CD14-positive monocyte (primary cell): ENCODE measurements at regions of chr17 and their contacts with region 1.

Region 1: DNA sequence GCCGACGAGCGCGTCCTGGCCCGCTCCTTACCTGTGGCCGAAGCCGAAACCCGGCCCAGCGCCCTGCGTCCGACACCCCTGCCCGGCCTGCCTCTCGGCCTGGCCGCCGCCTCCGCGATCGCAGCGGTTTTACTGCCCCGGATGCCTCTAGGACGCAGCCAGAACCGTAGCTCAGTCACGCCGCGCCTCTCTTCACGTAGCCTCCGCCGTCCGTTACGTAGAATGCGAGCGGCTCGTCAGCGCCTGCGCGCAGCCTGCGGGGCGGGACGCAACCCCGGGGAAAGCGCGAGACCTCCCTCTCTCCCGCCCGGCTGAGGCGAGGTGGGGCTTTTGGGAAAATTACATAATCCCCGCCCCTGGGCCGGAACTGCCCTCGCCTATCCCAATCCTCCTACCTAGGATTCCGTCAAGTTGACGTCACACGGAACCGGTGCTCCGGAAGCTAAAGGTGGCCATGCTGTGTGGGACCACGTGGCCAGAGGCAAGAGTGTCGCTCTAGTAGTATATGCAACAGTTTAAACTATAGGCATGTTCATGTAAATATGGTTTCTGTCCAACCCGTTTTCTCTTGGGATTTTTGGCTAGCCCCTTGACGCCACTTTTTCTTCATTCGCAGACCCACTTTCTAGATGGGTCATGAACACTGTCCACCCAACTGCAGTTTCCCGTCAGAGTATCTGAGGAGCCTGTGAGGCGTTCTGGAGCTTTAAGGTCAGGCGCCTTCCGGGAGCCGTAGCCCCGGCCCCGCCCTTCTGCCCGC is at the start of gene CCDC47:
- DNase-seq: peak; percentile 98 to 99 (median 99)
- H3K4me3 ChIP-seq: peak within 1 kb of the TSS; percentile 93 to 96 (median 94)
- H3K4me3 Mint-ChIP-seq: peak within 1 kb of the TSS; percentile 92 to 96
- H3K27ac ChIP-seq: peak within 1 kb of the TSS; percentile 93 to 94
- H3K27ac Mint-ChIP-seq: peak within 1 kb of the TSS; percentile 99 to 100 (median 99)
- H3K4me1 ChIP-seq: peaks cover 39 to 54% of the 10 kb centered on the region in 2 donors
- H3K4me1 Mint-ChIP-seq: peaks cover 59% of the 10 kb centered on the region
- H3K27me3 ChIP-seq: no peaks in the 10 kb centered on the region
- H3K27me3 Mint-ChIP-seq: peaks cover 0 to 1% (median 0%) of the 10 kb centered on the region in 3 donors
- CTCF ChIP-seq: no peak
- polyA plus RNA-seq, gene CCDC47: 15.2 to 56.4 (median 43.0) TPM

Region 2: GRCh38 chr17:63304704-63305261 is 468.8 kb before region 1 on chr17:
- intact Hi-C with region 1: no loop called
- DNase-seq: no peak
- H3K4me3 ChIP-seq: no peak overlapping the region
- H3K4me3 Mint-ChIP-seq: no peak overlapping the region
- H3K27ac ChIP-seq: no peak overlapping the region
- H3K27ac Mint-ChIP-seq: no peak overlapping the region
- H3K4me1 ChIP-seq: no peaks in the 10 kb centered on the region
- H3K4me1 Mint-ChIP-seq: peaks cover 2% of the 10 kb centered on the region
- H3K27me3 ChIP-seq: no peaks in the 10 kb centered on the region
- H3K27me3 Mint-ChIP-seq: peaks cover 0 to 3% (median 0%) of the 10 kb centered on the region in 3 donors
- CTCF ChIP-seq: no peak

Region 3: GRCh38 chr17:63741221-63742049 is 32.1 kb before region 1 on chr17 and contains the start of gene STRADA:
- intact Hi-C with region 1: loop called (anchors 1 to 5 kb)
- DNase-seq: peak; percentile 96 to 98 (median 97)
- H3K4me3 ChIP-seq: peak within 1 kb of the TSS; percentile 85 to 99 (median 98)
- H3K4me3 Mint-ChIP-seq: peak within 1 kb of the TSS; percentile 86 to 96
- H3K27ac ChIP-seq: peak within 1 kb of the TSS; percentile 84 to 87
- H3K27ac Mint-ChIP-seq: peak within 1 kb of the TSS; percentile 94 to 98 (median 98)
- H3K4me1 ChIP-seq: peaks cover 19 to 31% of the 10 kb centered on the region in 2 donors
- H3K4me1 Mint-ChIP-seq: peaks cover 23% of the 10 kb centered on the region
- H3K27me3 ChIP-seq: no peaks in the 10 kb centered on the region
- H3K27me3 Mint-ChIP-seq: no peaks in the 10 kb centered on the region
- CTCF ChIP-seq: no peak
- polyA plus RNA-seq, gene STRADA: 12.5 to 51.9 (median 19.8) TPM

Region 4: GRCh38 chr17:63819585-63820537 is 46.3 kb after region 1 on chr17:
- intact Hi-C with region 1: loop called in 1 of 2 experiments (anchors 5 kb)
- DNase-seq: no peak
- H3K4me3 ChIP-seq: no peak overlapping the region
- H3K4me3 Mint-ChIP-seq: no peak overlapping the region
- H3K27ac ChIP-seq: peak overlapping the region in 1 of 2 donors; percentile 41
- H3K27ac Mint-ChIP-seq: peak overlapping the region in 6 of 7 donors; percentile 15 to 74 (median 32)
- H3K4me1 ChIP-seq: no peaks in the 10 kb centered on the region
- H3K4me1 Mint-ChIP-seq: peaks cover 9% of the 10 kb centered on the region
- H3K27me3 ChIP-seq: no peaks in the 10 kb centered on the region
- H3K27me3 Mint-ChIP-seq: no peaks in the 10 kb centered on the region
- CTCF ChIP-seq: no peak

Region 5: DNA sequence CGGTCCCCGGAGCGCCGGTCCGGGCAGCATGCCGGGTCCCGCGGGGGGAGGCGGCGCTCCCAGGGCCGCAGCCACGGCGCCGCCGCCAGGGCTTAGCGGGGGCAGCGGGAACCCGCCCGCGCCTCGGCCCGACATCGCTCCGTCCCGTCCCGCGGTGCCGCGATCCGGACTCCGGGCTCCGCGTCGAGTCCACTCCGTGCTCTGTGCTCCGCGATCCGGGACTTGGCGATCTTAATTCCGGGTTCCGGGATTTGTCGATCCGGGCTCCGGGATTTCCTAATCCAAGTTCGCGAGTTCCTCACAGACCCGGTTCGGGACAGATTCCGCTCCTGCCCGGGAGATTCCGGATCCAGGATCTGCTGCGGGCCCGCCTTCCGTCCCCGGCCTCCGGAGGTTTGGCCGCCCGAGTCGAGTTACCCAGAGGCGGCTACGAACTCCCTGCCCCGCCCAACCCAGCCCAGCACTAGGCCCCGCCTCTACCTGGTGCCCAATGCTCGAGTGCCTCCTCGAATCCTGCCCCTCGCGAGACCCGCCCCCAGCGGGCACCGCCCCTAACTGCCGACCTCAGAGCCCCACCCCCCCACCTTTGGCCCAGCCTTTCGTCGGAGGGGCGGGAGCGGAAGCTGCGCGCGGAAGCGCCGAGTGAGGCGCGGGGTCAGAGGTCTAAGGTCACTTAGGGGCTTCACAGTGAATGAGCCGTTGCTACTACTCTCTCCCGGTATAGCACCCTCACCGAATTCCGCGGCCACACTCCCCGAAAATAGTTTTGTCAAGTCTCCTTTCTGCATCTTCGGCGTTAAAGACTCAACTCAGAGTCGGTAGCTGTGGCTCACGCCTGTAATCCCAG is 69.2 kb after region 1 on chr17 and contains the start of gene SMARCD2:
- intact Hi-C with region 1: loop called (anchors 5 kb)
- DNase-seq: peak; percentile 94 to 99 (median 98)
- H3K4me3 ChIP-seq: peak within 1 kb of the TSS; percentile 57 to 98 (median 92)
- H3K4me3 Mint-ChIP-seq: peak within 1 kb of the TSS; percentile 98
- H3K27ac ChIP-seq: peak within 1 kb of the TSS; percentile 84 to 85
- H3K27ac Mint-ChIP-seq: peak within 1 kb of the TSS; percentile 92 to 98 (median 96)
- H3K4me1 ChIP-seq: peaks cover 46 to 51% of the 10 kb centered on the region in 2 donors
- H3K4me1 Mint-ChIP-seq: peaks cover 46% of the 10 kb centered on the region
- H3K27me3 ChIP-seq: no peaks in the 10 kb centered on the region
- H3K27me3 Mint-ChIP-seq: peaks cover 0 to 3% (median 1%) of the 10 kb centered on the region in 3 donors
- CTCF ChIP-seq: no peak
- polyA plus RNA-seq, gene SMARCD2: 60.2 to 77.9 (median 64.0) TPM

Region 6: GRCh38 chr17:64354824-64355535 is 581.4 kb after region 1 on chr17:
- intact Hi-C with region 1: no loop called
- DNase-seq: no peak
- H3K4me3 ChIP-seq: no peak overlapping the region
- H3K4me3 Mint-ChIP-seq: no peak overlapping the region
- H3K27ac ChIP-seq: peak overlapping the region in 1 of 2 donors; percentile 69
- H3K27ac Mint-ChIP-seq: peak overlapping the region in 6 of 7 donors; percentile 25 to 89 (median 67)
- H3K4me1 ChIP-seq: peaks cover 2 to 23% of the 10 kb centered on the region in 2 donors
- H3K4me1 Mint-ChIP-seq: peaks cover 23% of the 10 kb centered on the region
- H3K27me3 ChIP-seq: no peaks in the 10 kb centered on the region
- H3K27me3 Mint-ChIP-seq: no peaks in the 10 kb centered on the region
- CTCF ChIP-seq: no peak